ENCODE measurements at regions of chr18 and their contacts with region 1.

Region 1: GRCh38 chr18:50878345-50879301 is at the start of gene ME2:
- DNase-seq: peak; percentile 90
- H3K4me3 Mint-ChIP-seq: peak within 1 kb of the TSS; percentile 88
- H3K27ac Mint-ChIP-seq: peak within 1 kb of the TSS; percentile 93
- H3K4me1 Mint-ChIP-seq: peaks cover 8% of the 10 kb centered on the region
- H3K27me3 Mint-ChIP-seq: no peaks in the 10 kb centered on the region
- CTCF ChIP-seq: no peak
- total RNA-seq, gene ME2: 64.8 and 67.2 TPM in 2 replicates

Region 2: DNA sequence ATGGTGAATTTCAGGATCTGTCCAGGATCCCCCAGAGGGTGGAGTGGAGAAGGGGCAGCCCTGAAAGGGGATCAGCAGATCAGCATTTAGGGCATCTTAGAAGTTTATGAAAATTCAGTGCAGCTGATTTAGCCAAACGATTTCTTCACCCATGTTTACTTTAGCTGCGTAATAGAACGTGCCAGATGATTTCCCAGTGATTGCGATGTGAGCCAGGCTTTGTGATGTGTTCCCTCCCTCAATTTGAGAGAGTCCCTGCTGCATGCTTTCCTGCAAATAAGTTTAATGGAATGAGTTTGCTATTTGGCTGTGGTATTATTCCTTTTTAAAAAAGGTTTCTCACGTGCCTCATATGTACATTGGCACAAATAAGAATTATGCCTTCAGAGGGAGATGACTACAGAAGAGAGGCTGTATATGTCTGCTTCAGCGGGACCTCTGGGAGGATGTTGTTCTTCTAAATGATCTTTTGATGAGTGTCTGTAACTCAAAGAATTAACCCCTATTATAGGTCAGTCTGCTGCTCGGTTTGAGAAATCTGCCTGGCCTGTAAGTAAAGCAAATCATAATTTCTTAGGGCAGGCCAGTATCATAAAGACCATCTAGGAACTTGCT is 170.7 kb before region 1 on chr18:
- CTCF ChIA-PET with region 1: no interaction called
- POLR2A ChIA-PET with region 1: no interaction called
- intact Hi-C with region 1: no loop called
- DNase-seq: peak; percentile 51
- H3K4me3 Mint-ChIP-seq: no peak overlapping the region
- H3K27ac Mint-ChIP-seq: no peak overlapping the region
- H3K4me1 Mint-ChIP-seq: no peaks in the 10 kb centered on the region
- H3K27me3 Mint-ChIP-seq: peaks cover 17% of the 10 kb centered on the region
- CTCF ChIP-seq: no peak

Region 3: DNA sequence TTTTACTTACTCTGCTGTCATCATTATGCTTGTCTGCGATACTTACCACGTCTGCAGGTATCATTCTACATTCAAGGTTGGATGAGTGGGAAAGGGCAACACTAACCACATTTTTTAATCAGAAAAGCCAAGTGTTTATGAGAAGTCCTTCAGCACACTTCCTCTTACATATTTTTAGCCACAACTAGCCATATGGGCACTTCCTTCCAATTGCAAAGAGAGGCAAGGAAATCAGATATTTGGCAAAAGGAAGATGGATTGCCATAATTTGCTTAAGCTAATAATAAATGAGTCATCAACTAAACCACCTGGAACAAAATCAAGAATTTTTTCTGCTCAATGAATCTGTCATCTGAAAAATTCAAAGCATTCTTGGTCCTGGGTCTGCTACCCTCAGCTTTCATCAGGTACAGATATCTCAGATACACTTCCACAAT is 42.1 kb before region 1 on chr18:
- CTCF ChIA-PET with region 1: no interaction called
- POLR2A ChIA-PET with region 1: interaction called, 16 read pairs
- intact Hi-C with region 1: no loop called
- DNase-seq: peak; percentile 78
- H3K4me3 Mint-ChIP-seq: no peak overlapping the region
- H3K27ac Mint-ChIP-seq: no peak overlapping the region
- H3K4me1 Mint-ChIP-seq: peaks cover 17% of the 10 kb centered on the region
- H3K27me3 Mint-ChIP-seq: no peaks in the 10 kb centered on the region
- CTCF ChIP-seq: no peak

Region 4: DNA sequence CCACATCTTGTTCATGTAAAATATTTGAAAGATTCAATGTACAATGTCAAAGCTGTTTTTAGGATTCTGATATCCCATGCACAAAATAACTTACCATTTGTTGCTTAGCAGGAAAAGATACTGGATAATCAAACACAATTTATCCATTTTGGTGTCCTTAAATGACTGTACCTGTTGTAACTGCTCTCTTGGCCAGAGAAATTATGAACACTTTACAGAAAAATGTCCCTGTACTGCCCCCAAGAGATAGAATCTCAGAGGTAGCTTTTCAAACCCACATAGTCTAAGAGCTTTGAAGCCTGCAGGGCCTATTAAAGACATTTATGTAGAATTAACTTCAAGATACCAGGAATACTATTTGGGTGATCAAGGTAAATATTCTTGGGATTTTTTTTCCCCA is 11.9 kb before region 1 on chr18:
- CTCF ChIA-PET with region 1: interaction called, 3 read pairs
- POLR2A ChIA-PET with region 1: interaction called, 72 read pairs
- intact Hi-C with region 1: no loop called
- DNase-seq: peak; percentile 22
- H3K4me3 Mint-ChIP-seq: no peak overlapping the region
- H3K27ac Mint-ChIP-seq: no peak overlapping the region
- H3K4me1 Mint-ChIP-seq: peaks cover 12% of the 10 kb centered on the region
- H3K27me3 Mint-ChIP-seq: no peaks in the 10 kb centered on the region
- CTCF ChIP-seq: peak; percentile 7

Region 5: GRCh38 chr18:50917021-50917420 is 38.4 kb after region 1 on chr18:
- CTCF ChIA-PET with region 1: no interaction called
- POLR2A ChIA-PET with region 1: no interaction called
- intact Hi-C with region 1: no loop called
- DNase-seq: no peak
- H3K4me3 Mint-ChIP-seq: no peak overlapping the region
- H3K27ac Mint-ChIP-seq: no peak overlapping the region
- H3K4me1 Mint-ChIP-seq: peaks cover 6% of the 10 kb centered on the region
- H3K27me3 Mint-ChIP-seq: no peaks in the 10 kb centered on the region
- CTCF ChIP-seq: no peak

Region 6: DNA sequence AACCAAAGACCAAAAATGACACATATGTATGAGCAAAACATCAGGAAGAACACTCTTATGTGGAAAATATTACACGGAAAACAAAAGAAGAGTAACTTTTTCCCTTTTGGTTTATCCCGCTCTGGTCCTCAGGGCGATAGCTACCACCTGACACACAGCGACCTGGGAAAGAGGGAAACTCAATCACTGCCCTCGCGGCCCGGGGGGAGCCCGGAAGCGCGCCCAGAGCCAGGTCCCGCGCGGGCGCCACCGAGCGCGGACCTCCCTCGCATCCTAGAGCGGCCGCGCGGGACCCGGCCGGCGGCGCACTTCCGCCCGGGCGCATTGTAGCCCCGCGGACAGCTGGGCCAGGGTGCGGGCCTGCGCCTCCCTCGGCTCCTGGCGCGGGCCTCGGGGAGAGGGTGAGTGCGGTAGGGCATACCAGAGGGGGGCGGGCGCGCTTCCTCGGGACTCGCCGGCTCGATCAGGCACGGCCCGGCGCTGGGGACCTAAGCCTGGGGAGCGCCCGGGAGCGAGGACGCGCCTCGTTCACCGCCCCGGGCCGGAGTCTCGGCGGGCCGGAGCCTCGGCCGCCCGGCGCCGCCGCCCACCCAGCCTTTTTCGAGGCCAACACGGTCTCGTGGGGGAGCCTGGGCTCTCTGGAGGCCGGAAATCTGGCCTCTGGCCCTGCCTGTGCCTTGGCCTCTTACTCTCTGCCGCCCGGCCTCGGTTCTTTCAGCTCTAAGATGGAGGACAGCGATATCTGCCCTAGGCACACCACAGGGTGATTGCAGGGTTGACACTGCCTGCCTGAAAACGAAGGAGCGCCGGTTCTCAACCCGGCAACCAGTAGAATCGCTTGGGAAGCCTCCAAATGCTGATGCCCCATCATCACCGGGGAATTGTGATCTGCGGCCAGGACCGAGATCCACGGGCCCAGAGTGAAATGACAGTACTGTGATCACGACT is 89.4 kb after region 1 on chr18 and contains the start of gene ELAC1:
- CTCF ChIA-PET with region 1: interaction called, 3 read pairs
- POLR2A ChIA-PET with region 1: interaction called, 35 read pairs
- intact Hi-C with region 1: loop called (anchors 5 kb)
- DNase-seq: peak; percentile 72
- H3K4me3 Mint-ChIP-seq: peak within 1 kb of the TSS; percentile 68
- H3K27ac Mint-ChIP-seq: peak within 1 kb of the TSS; percentile 75
- H3K4me1 Mint-ChIP-seq: peaks cover 27% of the 10 kb centered on the region
- H3K27me3 Mint-ChIP-seq: no peaks in the 10 kb centered on the region
- CTCF ChIP-seq: no peak
- total RNA-seq, gene ELAC1: 10.8 and 14.0 TPM in 2 replicates

Region 7: GRCh38 chr18:51029694-51030536 is 151.3 kb after region 1 on chr18 and contains the start of gene SMAD4:
- CTCF ChIA-PET with region 1: interaction called, 3 read pairs
- POLR2A ChIA-PET with region 1: interaction called, 64 read pairs
- intact Hi-C with region 1: loop called (anchors 2 kb)
- DNase-seq: peak; percentile 96
- H3K4me3 Mint-ChIP-seq: peak within 1 kb of the TSS; percentile 96
- H3K27ac Mint-ChIP-seq: peak within 1 kb of the TSS; percentile 100
- H3K4me1 Mint-ChIP-seq: peaks cover 22% of the 10 kb centered on the region
- H3K27me3 Mint-ChIP-seq: no peaks in the 10 kb centered on the region
- CTCF ChIP-seq: no peak
- total RNA-seq, gene SMAD4: 75.8 and 84.4 TPM in 2 replicates

Measured in MCF 10A (cell line).